Activated CD8-positive, alpha-beta T cell treated with anti-CD3 and anti-CD28 coated beads for 36 hours (primary cell): ENCODE measurements at regions of chrX and their contacts with region 1.

Region 1: GRCh38 chrX:77910108-77910840 is at the start of gene ATP7A:
- DNase-seq: peak; percentile 95
- ATAC-seq: peak; percentile 93
- H3K4me3 Mint-ChIP-seq: peak within 1 kb of the TSS; percentile 83
- H3K27ac Mint-ChIP-seq: peak within 1 kb of the TSS; percentile 98
- H3K4me1 Mint-ChIP-seq: peaks cover 15% of the 10 kb centered on the region
- H3K27me3 Mint-ChIP-seq: no peaks in the 10 kb centered on the region
- CTCF ChIP-seq: no peak
- total RNA-seq, gene ATP7A: 7.4 to 8.7 TPM

Region 2: DNA sequence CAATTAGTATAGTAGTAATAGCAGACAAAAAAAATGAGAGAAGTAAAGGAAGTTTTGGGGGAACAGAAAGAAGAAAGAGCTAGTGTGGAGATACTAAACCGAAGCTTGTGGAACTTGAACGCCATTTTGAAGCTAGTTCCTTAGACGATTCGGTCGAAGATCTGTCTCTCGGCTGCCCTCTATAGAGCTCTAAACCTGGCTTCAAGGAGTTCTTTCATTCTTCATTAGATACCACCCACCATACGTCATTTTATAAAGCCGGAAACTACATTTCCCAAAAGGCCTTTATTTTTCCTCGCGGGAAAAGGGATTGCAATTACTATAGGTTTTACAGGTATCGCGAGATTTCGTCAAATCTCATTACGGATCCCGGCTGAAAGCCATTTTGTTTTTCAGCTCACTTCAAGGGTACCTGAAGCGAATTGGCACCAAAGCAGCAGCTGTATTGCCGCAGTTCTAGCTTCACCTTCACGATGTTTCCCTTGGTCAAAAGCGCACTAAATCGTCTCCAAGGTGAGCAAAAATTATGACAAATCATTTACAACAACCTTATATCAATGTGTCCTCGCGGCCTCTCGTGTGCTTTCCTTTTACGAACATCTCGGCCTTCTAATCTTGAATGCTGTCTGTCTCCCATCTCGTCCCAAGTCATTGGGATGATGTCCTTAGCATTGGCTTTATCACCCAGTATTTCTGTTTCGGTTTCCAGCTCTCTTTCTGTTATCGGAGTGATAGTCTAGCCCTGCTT is 11.0 kb before region 1 on chrX and contains the start of gene COX7B:
- CTCF ChIA-PET with region 1: interaction called, 8 read pairs
- POLR2A ChIA-PET with region 1: interaction called, 21 read pairs
- intact Hi-C with region 1: loop called (anchors 1 kb)
- DNase-seq: peak; percentile 73
- ATAC-seq: peak; percentile 74
- H3K4me3 Mint-ChIP-seq: peak within 1 kb of the TSS; percentile 94
- H3K27ac Mint-ChIP-seq: peak within 1 kb of the TSS; percentile 97
- H3K4me1 Mint-ChIP-seq: peaks cover 18% of the 10 kb centered on the region
- H3K27me3 Mint-ChIP-seq: no peaks in the 10 kb centered on the region
- CTCF ChIP-seq: peak; percentile 38
- total RNA-seq, gene COX7B: 302 to 324 TPM

Region 3: DNA sequence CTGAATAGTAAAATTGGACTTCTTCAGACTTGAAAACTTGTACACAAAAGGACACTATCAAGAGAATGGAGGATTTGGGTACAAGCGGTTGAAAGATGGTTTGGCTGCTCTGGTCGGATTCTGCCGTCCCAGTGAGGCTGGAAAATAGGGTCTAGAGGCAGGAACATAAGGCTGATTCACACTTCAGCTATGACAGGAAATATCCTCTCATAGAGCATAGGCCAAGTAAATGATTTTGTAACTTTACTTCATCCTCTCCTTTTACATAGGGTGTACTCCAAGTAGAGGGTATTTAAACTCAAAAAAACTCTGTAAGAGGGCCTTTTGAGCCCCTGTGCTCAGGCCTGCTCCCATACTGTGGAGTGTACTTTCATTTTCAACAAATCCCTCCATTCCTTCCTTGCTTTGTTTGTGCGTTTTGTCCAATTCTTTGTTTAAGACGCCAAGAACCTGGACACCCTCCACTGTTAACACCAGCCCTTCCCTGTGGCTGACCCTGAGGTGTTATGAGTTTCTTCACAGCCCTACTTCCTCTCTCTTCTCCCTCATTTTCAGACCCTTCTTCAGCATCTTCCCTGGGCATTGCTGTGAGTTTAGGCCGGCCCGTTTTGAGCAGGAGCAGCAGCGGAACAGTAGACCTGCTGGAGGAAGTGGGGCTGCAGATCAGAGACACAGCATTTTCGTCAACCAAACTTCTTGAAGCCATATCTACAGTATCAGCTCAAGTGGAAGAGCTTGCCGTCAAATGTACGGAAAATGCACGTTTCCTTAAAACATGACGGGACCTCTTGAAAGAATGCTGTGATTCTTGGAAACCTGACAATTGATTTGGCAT is 52.0 kb after region 1 on chrX:
- CTCF ChIA-PET with region 1: no interaction called
- POLR2A ChIA-PET with region 1: no interaction called
- intact Hi-C with region 1: no loop called
- DNase-seq: no peak
- ATAC-seq: peak; percentile 35
- H3K4me3 Mint-ChIP-seq: peak overlapping the region; percentile 69
- H3K27ac Mint-ChIP-seq: peak overlapping the region; percentile 89
- H3K4me1 Mint-ChIP-seq: peaks cover 42% of the 10 kb centered on the region
- H3K27me3 Mint-ChIP-seq: no peaks in the 10 kb centered on the region
- CTCF ChIP-seq: no peak

Region 4: GRCh38 chrX:78092296-78092695 is 182.0 kb after region 1 on chrX:
- CTCF ChIA-PET with region 1: interaction called, 3 read pairs
- POLR2A ChIA-PET with region 1: interaction called, 3 read pairs
- intact Hi-C with region 1: loop called (anchors 10 kb)
- DNase-seq: peak; percentile 34
- ATAC-seq: peak; percentile 91
- H3K4me3 Mint-ChIP-seq: no peak overlapping the region
- H3K27ac Mint-ChIP-seq: peak overlapping the region; percentile 70
- H3K4me1 Mint-ChIP-seq: peaks cover 9% of the 10 kb centered on the region
- H3K27me3 Mint-ChIP-seq: no peaks in the 10 kb centered on the region
- CTCF ChIP-seq: peak; percentile 64